Activated CD8-positive, alpha-beta memory T cell treated with anti-CD3 and anti-CD28 coated beads, Interleukin-2, amount 10 ng/mL, durations not matched to agents 7 days and 5 days (primary cell): ENCODE measurements at regions of chr2 and their contacts with region 1.

Region 1: DNA sequence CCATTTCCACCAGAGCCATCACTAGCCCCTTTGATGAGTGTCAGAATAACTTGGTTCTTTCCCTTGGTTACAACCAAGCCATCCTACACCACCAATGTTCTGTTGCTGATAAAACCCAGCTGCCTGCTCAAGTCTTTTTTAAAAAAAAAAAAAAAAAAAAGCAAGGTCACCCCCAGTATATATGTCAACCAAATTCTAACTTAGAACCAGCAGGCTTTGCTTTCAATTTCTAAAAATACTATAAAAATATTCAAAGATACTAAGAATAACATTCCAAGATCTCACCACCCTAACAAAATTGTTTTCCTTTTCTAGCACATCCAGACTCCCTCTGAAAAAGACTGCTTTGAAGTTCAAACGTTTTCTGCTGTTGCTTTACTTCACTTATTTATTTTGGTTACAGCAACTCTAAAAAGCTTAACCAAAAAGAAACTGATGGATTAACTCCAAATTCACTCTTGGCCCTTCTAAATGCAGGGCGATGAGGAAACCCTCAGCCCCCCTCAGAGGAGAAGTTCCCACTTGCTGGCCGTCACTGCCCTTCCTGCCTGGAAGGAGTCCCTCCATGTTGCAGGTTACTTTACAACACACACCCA is 10.9 kb downstream of the UXS1 start:
- DNase-seq: no peak
- ATAC-seq: no peak
- H3K4me3 Mint-ChIP-seq: no peak overlapping the region
- H3K27ac Mint-ChIP-seq: no peak overlapping the region
- H3K4me1 Mint-ChIP-seq: peaks cover 33% of the 10 kb centered on the region
- H3K27me3 Mint-ChIP-seq: no peaks in the 10 kb centered on the region

Region 2: DNA sequence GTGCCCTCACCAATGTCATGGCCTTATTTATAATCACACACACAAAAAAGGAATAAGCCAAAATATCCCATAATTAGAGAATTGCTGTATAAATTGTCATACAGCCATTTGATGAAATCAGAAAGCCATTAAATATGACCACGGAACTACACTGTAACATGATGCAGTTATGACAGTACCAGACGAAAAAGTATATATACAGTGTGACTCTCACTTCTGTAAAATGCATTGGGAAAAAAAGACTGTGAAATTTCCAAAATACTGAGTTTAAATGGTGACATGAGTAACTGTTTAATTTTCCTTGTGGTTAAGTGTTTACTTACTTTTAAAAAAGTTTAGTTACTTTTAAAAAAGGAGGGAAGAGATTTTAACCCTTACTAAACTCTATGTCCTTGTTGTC is 14.5 kb before region 1 on chr2:
- CTCF ChIA-PET with region 1: interaction called, 13 read pairs
- DNase-seq: no peak
- ATAC-seq: no peak
- H3K4me3 Mint-ChIP-seq: no peak overlapping the region
- H3K27ac Mint-ChIP-seq: no peak overlapping the region
- H3K4me1 Mint-ChIP-seq: peaks cover 30% of the 10 kb centered on the region
- H3K27me3 Mint-ChIP-seq: no peaks in the 10 kb centered on the region